ENCODE measurements at regions of chr3 and their contacts with region 1.

Region 1: DNA sequence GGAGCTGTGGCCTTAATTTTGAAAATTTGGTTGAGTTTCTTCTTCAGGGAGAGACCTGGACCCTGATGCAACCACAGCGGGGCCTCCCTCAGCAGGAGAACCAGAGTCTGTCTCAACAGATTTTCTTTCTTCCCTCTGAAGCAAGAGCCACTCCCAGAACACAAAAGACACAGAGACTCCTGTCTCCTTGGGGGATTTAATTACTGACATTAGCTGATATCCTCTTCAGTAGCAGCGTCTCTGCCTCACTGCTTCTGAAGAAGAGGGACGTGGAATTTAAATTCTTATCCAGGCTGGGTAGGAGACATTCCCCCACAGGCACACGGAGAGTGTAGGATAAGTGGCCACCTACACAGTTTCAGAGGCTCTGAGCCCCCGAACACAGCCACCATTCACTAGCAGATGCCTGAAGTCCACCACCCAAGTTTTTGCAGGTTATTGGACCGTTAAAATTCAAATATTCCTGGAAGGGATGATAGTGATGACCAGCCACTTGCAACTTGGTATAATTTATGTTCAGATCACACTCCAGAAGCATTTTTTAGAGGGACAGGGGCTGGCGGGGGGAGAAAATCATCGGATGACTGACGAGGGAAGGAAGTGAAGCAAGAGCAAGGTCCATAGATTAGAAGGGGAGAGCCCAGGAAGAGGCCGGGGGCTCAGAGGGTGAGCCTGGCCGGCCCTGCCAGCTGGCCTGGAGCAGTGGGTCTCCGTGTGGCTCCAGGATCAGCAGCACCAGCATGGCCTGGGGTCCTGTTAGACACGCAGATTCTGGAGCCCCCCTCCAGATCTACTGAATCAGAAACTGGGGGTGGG is 109.7 kb downstream of the BDH1 start:
- DNase-seq: no peak
- H3K4me3 ChIP-seq: no peak overlapping the region
- H3K27ac ChIP-seq: no peak overlapping the region
- H3K4me1 ChIP-seq: no peaks in the 10 kb centered on the region
- H3K27me3 ChIP-seq: no peaks in the 10 kb centered on the region
- CTCF ChIP-seq: no peak

Region 2: DNA sequence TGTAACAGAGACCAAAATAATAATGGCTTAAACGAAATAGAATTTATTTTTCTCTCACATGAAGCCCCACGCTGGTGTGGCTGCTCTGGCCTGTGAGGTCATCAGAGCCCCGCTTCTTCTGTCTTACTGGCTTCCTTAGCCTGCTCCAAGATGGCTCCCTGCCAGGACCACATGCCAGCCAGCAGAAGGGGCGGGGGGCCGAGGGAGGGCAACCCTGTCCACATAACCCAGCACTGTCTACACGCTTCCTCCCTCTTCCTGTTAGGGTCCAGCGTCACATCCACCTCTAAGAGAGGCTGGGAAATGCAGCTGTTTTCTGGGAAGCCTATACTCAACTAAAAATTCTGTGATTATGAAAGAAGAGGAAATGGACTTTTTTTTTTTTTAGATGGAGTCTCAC is 39.8 kb before region 1 on chr3:
- CTCF ChIA-PET with region 1: no interaction called
- POLR2A ChIA-PET with region 1: no interaction called
- intact Hi-C with region 1: no loop called
- DNase-seq: no peak
- H3K4me3 ChIP-seq: no peak overlapping the region
- H3K27ac ChIP-seq: no peak overlapping the region
- H3K4me1 ChIP-seq: peaks cover 9% of the 10 kb centered on the region; the same call in 1 of the 2 replicates
- H3K27me3 ChIP-seq: no peaks in the 10 kb centered on the region
- CTCF ChIP-seq: no peak

Region 3: GRCh38 chr3:197434830-197435229 is 11.3 kb before region 1 on chr3:
- CTCF ChIA-PET with region 1: no interaction called
- POLR2A ChIA-PET with region 1: interaction called, 24 read pairs
- intact Hi-C with region 1: no loop called
- DNase-seq: no peak
- H3K4me3 ChIP-seq: no peak overlapping the region
- H3K27ac ChIP-seq: no peak overlapping the region
- H3K4me1 ChIP-seq: no peaks in the 10 kb centered on the region
- H3K27me3 ChIP-seq: no peaks in the 10 kb centered on the region
- CTCF ChIP-seq: no peak

Region 4: GRCh38 chr3:197456261-197457091 is 10.4 kb after region 1 on chr3:
- CTCF ChIA-PET with region 1: no interaction called
- POLR2A ChIA-PET with region 1: no interaction called
- intact Hi-C with region 1: no loop called
- DNase-seq: peak; percentile 81 to 94
- H3K4me3 ChIP-seq: peak overlapping the region; percentile 71
- H3K27ac ChIP-seq: peak overlapping the region; percentile 63
- H3K4me1 ChIP-seq: peaks cover 26% of the 10 kb centered on the region
- H3K27me3 ChIP-seq: no peaks in the 10 kb centered on the region
- CTCF ChIP-seq: no peak

Region 5: GRCh38 chr3:197599089-197599765 is 153.1 kb after region 1 on chr3:
- CTCF ChIA-PET with region 1: no interaction called
- POLR2A ChIA-PET with region 1: no interaction called
- intact Hi-C with region 1: no loop called
- DNase-seq: peak; percentile 73 to 84
- H3K4me3 ChIP-seq: peak overlapping the region; percentile 53
- H3K27ac ChIP-seq: no peak overlapping the region
- H3K4me1 ChIP-seq: 0 out of 2 replicates have a peak, but pooled peaks cover 6% of the 10 kb centered on the region
- H3K27me3 ChIP-seq: no peaks in the 10 kb centered on the region
- CTCF ChIP-seq: peak; percentile 98

Measured in PC-9 (cell line).